Mammary epithelial cell (primary cell): ENCODE measurements at regions of chr2 and their contacts with region 1.

Region 1: GRCh38 chr2:186589612-186590349 is at the start of gene ITGAV:
- DNase-seq: peak; percentile 94
- H3K4me3 ChIP-seq: peak within 1 kb of the TSS; percentile 86 to 92 (median 89)
- H3K27ac ChIP-seq: peak within 1 kb of the TSS; percentile 85
- H3K4me1 ChIP-seq: peaks cover 11% of the 10 kb centered on the region
- H3K27me3 ChIP-seq: no peaks in the 10 kb centered on the region
- CTCF ChIP-seq: no peak
- total RNA-seq, gene ITGAV: 103 to 257 TPM

Region 2: DNA sequence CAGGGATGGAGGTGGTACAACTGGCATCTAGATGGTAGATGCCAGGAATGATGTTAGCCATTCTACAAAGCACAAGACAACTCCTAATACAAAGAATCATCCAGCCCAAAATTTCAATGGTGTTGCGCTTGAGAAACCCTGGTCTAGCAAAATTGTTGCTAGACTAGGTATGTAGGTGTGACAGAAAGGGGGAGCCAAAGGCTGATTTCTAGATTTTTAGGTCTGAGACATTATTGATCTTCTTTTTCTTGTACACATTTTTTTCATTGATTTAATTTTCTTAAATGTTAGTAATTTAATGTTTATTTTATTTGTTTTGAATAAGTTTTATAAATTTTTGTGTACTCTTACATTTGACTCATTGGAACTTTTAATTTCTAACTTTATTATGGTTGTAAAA is 634.7 kb before region 1 on chr2:
- CTCF ChIA-PET with region 1: no interaction called
- dilution Hi-C with region 1: no loop called
- in situ Hi-C with region 1: no loop called
- intact Hi-C with region 1: no loop called
- DNase-seq: no peak
- H3K4me3 ChIP-seq: no peak overlapping the region
- H3K27ac ChIP-seq: no peak overlapping the region
- H3K4me1 ChIP-seq: no peaks in the 10 kb centered on the region
- H3K27me3 ChIP-seq: no peaks in the 10 kb centered on the region
- CTCF ChIP-seq: no peak

Region 3: GRCh38 chr2:186503848-186504606 is 85.8 kb before region 1 on chr2:
- CTCF ChIA-PET with region 1: no interaction called
- dilution Hi-C with region 1: loop called (anchors 5 kb)
- in situ Hi-C with region 1: no loop called
- intact Hi-C with region 1: loop called (anchors 1 kb)
- DNase-seq: peak; percentile 17
- H3K4me3 ChIP-seq: no peak overlapping the region
- H3K27ac ChIP-seq: no peak overlapping the region
- H3K4me1 ChIP-seq: no peaks in the 10 kb centered on the region
- H3K27me3 ChIP-seq: no peaks in the 10 kb centered on the region
- CTCF ChIP-seq: peak; percentile 42 to 47

Region 4: GRCh38 chr2:186516396-186516795 is 73.4 kb before region 1 on chr2:
- CTCF ChIA-PET with region 1: no interaction called
- dilution Hi-C with region 1: no loop called
- in situ Hi-C with region 1: no loop called
- intact Hi-C with region 1: loop called (anchors 2 kb)
- DNase-seq: peak; percentile 14
- H3K4me3 ChIP-seq: no peak overlapping the region
- H3K27ac ChIP-seq: no peak overlapping the region
- H3K4me1 ChIP-seq: peaks cover 15% of the 10 kb centered on the region
- H3K27me3 ChIP-seq: no peaks in the 10 kb centered on the region
- CTCF ChIP-seq: no peak

Region 5: GRCh38 chr2:186544255-186544675 is 45.5 kb before region 1 on chr2:
- CTCF ChIA-PET with region 1: no interaction called
- dilution Hi-C with region 1: no loop called
- in situ Hi-C with region 1: no loop called
- intact Hi-C with region 1: loop called (anchors 1 kb)
- DNase-seq: peak; percentile 96
- H3K4me3 ChIP-seq: peak overlapping the region in 1 of 3 experiments; percentile 39
- H3K27ac ChIP-seq: peak overlapping the region; percentile 98
- H3K4me1 ChIP-seq: peaks cover 43% of the 10 kb centered on the region
- H3K27me3 ChIP-seq: no peaks in the 10 kb centered on the region
- CTCF ChIP-seq: no peak

Region 6: DNA sequence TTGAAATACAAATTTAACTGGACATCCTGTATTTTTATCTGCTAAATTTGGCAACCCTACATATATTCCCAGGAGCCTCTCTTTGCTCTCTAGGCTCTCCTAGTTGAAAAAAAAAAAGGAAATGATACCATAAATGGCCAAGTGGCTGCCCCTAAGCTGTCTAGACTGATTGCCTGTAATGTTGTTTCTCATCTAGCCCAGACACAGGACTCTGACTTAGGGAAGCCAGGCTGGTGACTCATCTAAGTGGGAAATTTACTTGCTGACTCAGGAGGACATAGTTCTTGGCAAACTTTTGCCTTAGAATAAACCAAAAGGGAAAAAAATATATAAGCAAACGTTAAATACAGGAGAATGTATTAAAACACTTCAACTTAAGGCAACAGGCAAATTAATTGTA is 14.5 kb before region 1 on chr2:
- CTCF ChIA-PET with region 1: interaction called, 3 read pairs
- dilution Hi-C with region 1: no loop called
- in situ Hi-C with region 1: no loop called
- intact Hi-C with region 1: loop called (anchors 1 kb)
- DNase-seq: peak; percentile 97
- H3K4me3 ChIP-seq: no peak overlapping the region
- H3K27ac ChIP-seq: peak overlapping the region; percentile 67
- H3K4me1 ChIP-seq: peaks cover 27% of the 10 kb centered on the region
- H3K27me3 ChIP-seq: no peaks in the 10 kb centered on the region
- CTCF ChIP-seq: no peak

Region 7: GRCh38 chr2:186641807-186642321 is 52.1 kb after region 1 on chr2:
- CTCF ChIA-PET with region 1: no interaction called
- dilution Hi-C with region 1: no loop called
- in situ Hi-C with region 1: no loop called
- intact Hi-C with region 1: loop called (anchors 2 kb)
- DNase-seq: peak; percentile 74
- H3K4me3 ChIP-seq: no peak overlapping the region
- H3K27ac ChIP-seq: no peak overlapping the region
- H3K4me1 ChIP-seq: no peaks in the 10 kb centered on the region
- H3K27me3 ChIP-seq: no peaks in the 10 kb centered on the region
- CTCF ChIP-seq: peak; percentile 75 to 87